ENCODE measurements at regions of chr18 and their contacts with region 1.

Region 1: GRCh38 chr18:76803814-76804213 is 18.5 kb upstream of the ZNF236 start:
- DNase-seq: peak in 4 of 5 donors; percentile 47 to 60 (median 54)
- ATAC-seq: peak in 3 of 4 donors; percentile 54 to 74 (median 66)
- H3K4me3 ChIP-seq: no peak overlapping the region
- H3K27ac ChIP-seq: no peak overlapping the region
- H3K4me1 ChIP-seq: peaks cover 0 to 16% (median 4%) of the 10 kb centered on the region in 12 donors
- H3K27me3 ChIP-seq: peaks cover 0 to 13% (median 0%) of the 10 kb centered on the region in 9 donors
- CTCF ChIP-seq: peak; percentile 59 to 82 (median 72)
- POLR2A ChIP-seq: no peak

Region 2: GRCh38 chr18:76859474-76860339 is 55.9 kb after region 1 on chr18:
- intact Hi-C with region 1: loop called in 1 of 10 experiments (anchors 10 kb)
- DNase-seq: no peak
- ATAC-seq: no peak
- H3K4me3 ChIP-seq: no peak overlapping the region
- H3K27ac ChIP-seq: no peak overlapping the region
- H3K4me1 ChIP-seq: no peaks in the 10 kb centered on the region
- H3K27me3 ChIP-seq: no peaks in the 10 kb centered on the region
- CTCF ChIP-seq: no peak
- POLR2A ChIP-seq: no peak

Region 3: GRCh38 chr18:76881744-76882143 is 77.9 kb after region 1 on chr18:
- intact Hi-C with region 1: loop called in 3 of 10 experiments (anchors 10 kb)
- DNase-seq: no peak
- ATAC-seq: no peak
- H3K4me3 ChIP-seq: no peak overlapping the region
- H3K27ac ChIP-seq: no peak overlapping the region
- H3K4me1 ChIP-seq: no peaks in the 10 kb centered on the region
- H3K27me3 ChIP-seq: no peaks in the 10 kb centered on the region
- CTCF ChIP-seq: no peak
- POLR2A ChIP-seq: no peak

Region 4: GRCh38 chr18:76922107-76922506 is 118.3 kb after region 1 on chr18:
- intact Hi-C with region 1: loop called in 1 of 10 experiments (anchors 10 kb)
- DNase-seq: peak in 3 of 5 donors; percentile 32 to 62 (median 43)
- ATAC-seq: peak; percentile 83 to 93 (median 92)
- H3K4me3 ChIP-seq: no peak overlapping the region
- H3K27ac ChIP-seq: no peak overlapping the region
- H3K4me1 ChIP-seq: no peaks in the 10 kb centered on the region
- H3K27me3 ChIP-seq: no peaks in the 10 kb centered on the region
- CTCF ChIP-seq: peak; percentile 21 to 64 (median 46)
- POLR2A ChIP-seq: no peak

Region 5: DNA sequence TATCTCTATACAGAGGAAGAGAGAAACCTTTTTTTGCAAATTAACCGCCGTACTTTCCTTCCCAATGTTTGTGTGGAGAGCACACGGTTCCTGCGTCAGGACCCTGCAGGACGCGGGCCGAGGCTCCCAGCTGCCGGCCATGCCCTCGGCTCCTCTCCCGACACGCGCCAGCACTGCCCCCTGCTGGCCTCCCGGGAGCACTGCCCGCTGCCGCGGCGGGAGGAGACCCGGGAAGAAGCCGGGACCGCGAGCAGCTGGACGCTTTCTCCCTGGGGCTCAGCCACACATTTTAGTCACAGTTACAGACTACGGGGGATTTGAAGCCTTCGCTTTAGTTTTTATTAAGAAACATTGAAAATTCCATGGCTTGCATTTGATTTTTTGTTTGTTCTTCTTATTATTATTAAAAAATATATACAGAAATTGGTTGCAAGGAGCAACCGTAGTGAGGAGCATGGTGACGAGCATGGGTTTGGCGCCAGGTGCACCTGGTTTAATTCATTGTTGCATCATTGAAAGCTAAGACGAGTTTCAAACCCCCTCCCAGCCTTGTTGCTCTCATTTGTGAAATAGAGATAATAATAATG is 847.1 kb after region 1 on chr18:
- intact Hi-C with region 1: loop called in 5 of 10 experiments (anchors 5 to 10 kb)
- DNase-seq: peak; percentile 71 to 89 (median 74)
- ATAC-seq: peak; percentile 65 to 98 (median 91)
- H3K4me3 ChIP-seq: peak overlapping the region in 1 of 12 donors; percentile 2
- H3K27ac ChIP-seq: no peak overlapping the region
- H3K4me1 ChIP-seq: peaks cover 0 to 8% (median 0%) of the 10 kb centered on the region in 12 donors
- H3K27me3 ChIP-seq: peaks cover 0 to 18% (median 4%) of the 10 kb centered on the region in 9 donors
- CTCF ChIP-seq: peak; percentile 75 to 95 (median 88)
- POLR2A ChIP-seq: no peak

Region 6: DNA sequence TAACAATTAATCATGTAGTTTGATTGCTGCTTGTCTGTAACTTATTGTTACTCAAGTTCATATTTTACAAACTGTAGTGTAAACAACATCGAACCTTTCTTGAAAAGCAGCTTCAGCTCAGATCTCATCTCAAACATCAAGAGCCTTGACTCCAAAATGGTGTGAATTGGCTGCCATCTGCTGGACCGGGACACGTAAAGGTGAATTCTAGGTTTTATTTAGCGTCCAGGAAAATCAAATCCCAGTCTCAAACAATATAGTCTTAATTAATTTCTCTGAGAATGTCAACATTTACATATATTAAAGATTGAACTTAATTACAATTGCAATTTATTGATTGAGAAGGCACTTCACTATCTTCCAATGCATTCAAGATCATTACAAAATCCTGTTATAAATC is 898.9 kb after region 1 on chr18:
- intact Hi-C with region 1: loop called in 3 of 10 experiments (anchors 5 to 10 kb)
- DNase-seq: no peak
- ATAC-seq: no peak
- H3K4me3 ChIP-seq: no peak overlapping the region
- H3K27ac ChIP-seq: no peak overlapping the region
- H3K4me1 ChIP-seq: no peaks in the 10 kb centered on the region
- H3K27me3 ChIP-seq: peaks cover 0 to 18% (median 0%) of the 10 kb centered on the region in 9 donors
- CTCF ChIP-seq: peak in 7 of 12 donors; percentile 10 to 39 (median 28)
- POLR2A ChIP-seq: no peak

Measured in heart left ventricle (tissue), 16 donors.